Heart right ventricle (tissue), 16 donors: ENCODE measurements at regions of chr13 and their contacts with region 1.

Region 1: DNA sequence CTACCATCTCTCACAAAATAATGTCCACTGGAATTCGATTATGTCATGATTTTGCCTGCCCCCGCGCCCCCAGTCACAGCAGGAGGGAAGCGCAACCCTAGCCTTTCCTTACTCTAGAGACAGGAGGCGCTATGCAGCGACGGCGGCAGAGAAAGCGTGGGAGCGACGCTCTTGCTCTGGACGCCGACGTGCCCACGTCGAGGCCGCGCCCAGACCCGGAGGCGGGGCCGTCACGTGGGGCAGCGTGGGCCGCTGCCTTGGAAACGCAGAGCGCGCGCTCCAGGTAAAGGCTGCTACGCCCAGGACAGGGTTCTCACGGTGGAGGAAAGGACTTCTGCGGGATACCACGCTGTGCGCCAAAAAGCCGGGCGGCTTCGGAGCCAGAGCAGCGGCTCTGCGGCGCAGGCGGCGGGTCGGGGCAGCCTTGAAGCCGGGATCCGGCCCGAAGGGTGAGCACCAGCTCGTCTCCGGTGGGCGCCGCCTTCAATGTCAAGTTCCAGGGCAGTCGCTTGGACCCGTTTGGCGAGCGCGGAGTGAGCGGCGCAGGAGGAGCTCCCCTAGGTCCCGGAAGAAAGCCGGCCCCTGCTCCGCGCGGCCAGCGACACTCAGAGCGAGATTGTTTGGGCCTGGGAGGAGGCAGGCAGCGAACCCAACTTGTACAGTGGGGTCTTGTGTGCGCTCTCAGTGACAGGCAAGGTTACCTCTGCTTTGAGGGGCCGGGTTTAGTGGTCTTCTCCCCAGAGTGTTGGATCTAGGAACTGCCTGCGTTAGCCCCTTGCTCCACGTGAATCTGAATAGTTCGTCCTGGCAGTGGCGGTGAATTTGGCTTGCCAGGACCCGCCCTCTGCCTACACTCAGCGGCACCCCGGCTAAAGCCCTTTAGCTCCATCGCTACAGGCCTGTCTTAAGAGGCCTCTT is 121.7 kb downstream of the MRPL57 start:
- DNase-seq: peak; percentile 83 to 85
- ATAC-seq: peak; percentile 99 to 100 (median 100)
- H3K4me3 ChIP-seq: peak overlapping the region; percentile 69 to 99 (median 86)
- H3K27ac ChIP-seq: peak overlapping the region in 9 of 10 donors; percentile 67 to 76 (median 71)
- H3K4me1 ChIP-seq: peaks cover 5 to 25% (median 20%) of the 10 kb centered on the region in 9 donors
- H3K27me3 ChIP-seq: no peaks in the 10 kb centered on the region
- CTCF ChIP-seq: peak; percentile 78 to 97 (median 90)

Region 2: GRCh38 chr13:21176220-21176982 is 121.8 kb before region 1 on chr13 and contains the starts of genes MRPL57 and SKA3:
- intact Hi-C with region 1: loop called in 1 of 10 experiments (anchors 10 kb)
- DNase-seq: peak; percentile 90 to 94
- ATAC-seq: peak; percentile 98 to 100 (median 99)
- H3K4me3 ChIP-seq: peak within 1 kb of the TSS; percentile 72 to 98 (median 84)
- H3K27ac ChIP-seq: peak within 1 kb of the TSS; percentile 92 to 99 (median 96)
- H3K4me1 ChIP-seq: peaks cover 3 to 29% (median 16%) of the 10 kb centered on the region in 9 donors
- H3K27me3 ChIP-seq: no peaks in the 10 kb centered on the region
- CTCF ChIP-seq: peak in 4 of 9 donors; percentile 15 to 31 (median 22)
- total RNA-seq, gene MRPL57: 20.0 to 25.9 (median 22.9) TPM
- total RNA-seq, gene SKA3: 0.07 to 1.8 (median 0.23) TPM in 9 of 10 donors, not detected in the other

Region 3: GRCh38 chr13:21458813-21459701 is 160.9 kb after region 1 on chr13 and contains the start of gene ZDHHC20:
- intact Hi-C with region 1: loop called in 3 of 10 experiments (anchors 5 kb)
- DNase-seq: peak; percentile 87 to 96
- ATAC-seq: peak; percentile 95 to 98 (median 98)
- H3K4me3 ChIP-seq: peak within 1 kb of the TSS; percentile 72 to 100 (median 96)
- H3K27ac ChIP-seq: peak within 1 kb of the TSS; percentile 81 to 99 (median 94)
- H3K4me1 ChIP-seq: peaks cover 4 to 37% (median 17%) of the 10 kb centered on the region in 9 donors
- H3K27me3 ChIP-seq: no peaks in the 10 kb centered on the region
- CTCF ChIP-seq: peak in 2 of 9 donors; percentile 8 to 9
- total RNA-seq, gene ZDHHC20: 11.4 to 28.5 (median 14.8) TPM